WTC11 (cell line): ENCODE measurements at regions of chr18 and their contacts with region 1.

Region 1: GRCh38 chr18:12236934-12237832 is 17.0 kb upstream of the CIDEA start:
- DNase-seq: peak; percentile 89
- ATAC-seq: peak; percentile 98
- H3K4me3 Mint-ChIP-seq: no peak overlapping the region
- H3K27ac Mint-ChIP-seq: no peak overlapping the region
- H3K4me1 Mint-ChIP-seq: no peaks in the 10 kb centered on the region
- H3K27me3 Mint-ChIP-seq: peaks cover 6% of the 10 kb centered on the region
- CTCF ChIP-seq: peak; percentile 93

Region 2: GRCh38 chr18:11963991-11964484 is 273.1 kb before region 1 on chr18:
- CTCF ChIA-PET with region 1: no interaction called
- POLR2A ChIA-PET with region 1: no interaction called
- DNase-seq: no peak
- ATAC-seq: peak; percentile 46
- H3K4me3 Mint-ChIP-seq: no peak overlapping the region
- H3K27ac Mint-ChIP-seq: no peak overlapping the region
- H3K4me1 Mint-ChIP-seq: peaks cover 8% of the 10 kb centered on the region; the same call in 1 of the 2 replicates
- H3K27me3 Mint-ChIP-seq: no peaks in the 10 kb centered on the region
- CTCF ChIP-seq: no peak

Region 3: DNA sequence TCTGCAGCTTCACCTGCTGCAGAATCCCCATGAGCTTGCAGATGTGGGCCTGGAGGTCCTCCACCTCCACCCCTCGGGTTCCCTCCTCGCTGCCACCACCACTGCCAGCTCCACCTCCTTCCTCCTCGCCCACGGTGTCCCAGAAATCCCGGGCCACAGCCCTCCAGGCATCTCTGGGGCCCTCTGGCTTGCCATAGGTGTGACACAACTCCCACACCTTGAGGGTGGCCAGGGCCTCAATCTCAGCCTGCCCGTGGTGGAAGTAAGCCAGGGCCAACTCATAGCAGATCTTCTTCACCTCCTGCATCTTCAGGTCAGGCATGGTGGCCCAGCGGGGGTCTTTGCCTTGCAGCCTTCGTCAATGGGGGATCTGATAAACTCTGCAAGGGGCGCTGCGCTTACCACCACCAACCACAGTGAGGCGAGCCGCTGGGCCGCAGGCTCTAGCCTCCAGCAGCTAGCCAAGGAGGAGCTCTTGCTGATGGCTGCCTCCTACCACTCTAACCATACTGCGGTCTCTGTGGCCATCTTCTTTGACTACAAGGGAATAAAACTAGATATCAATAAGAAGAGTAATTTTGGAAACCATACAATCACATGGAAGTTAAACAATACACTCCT is 179.7 kb before region 1 on chr18:
- CTCF ChIA-PET with region 1: interaction called, 16 read pairs
- POLR2A ChIA-PET with region 1: no interaction called
- DNase-seq: peak; percentile 57
- ATAC-seq: peak; percentile 90
- H3K4me3 Mint-ChIP-seq: no peak overlapping the region
- H3K27ac Mint-ChIP-seq: no peak overlapping the region
- H3K4me1 Mint-ChIP-seq: no peaks in the 10 kb centered on the region
- H3K27me3 Mint-ChIP-seq: no peaks in the 10 kb centered on the region; the same call in 1 of the 2 replicates
- CTCF ChIP-seq: peak; percentile 24

Region 4: DNA sequence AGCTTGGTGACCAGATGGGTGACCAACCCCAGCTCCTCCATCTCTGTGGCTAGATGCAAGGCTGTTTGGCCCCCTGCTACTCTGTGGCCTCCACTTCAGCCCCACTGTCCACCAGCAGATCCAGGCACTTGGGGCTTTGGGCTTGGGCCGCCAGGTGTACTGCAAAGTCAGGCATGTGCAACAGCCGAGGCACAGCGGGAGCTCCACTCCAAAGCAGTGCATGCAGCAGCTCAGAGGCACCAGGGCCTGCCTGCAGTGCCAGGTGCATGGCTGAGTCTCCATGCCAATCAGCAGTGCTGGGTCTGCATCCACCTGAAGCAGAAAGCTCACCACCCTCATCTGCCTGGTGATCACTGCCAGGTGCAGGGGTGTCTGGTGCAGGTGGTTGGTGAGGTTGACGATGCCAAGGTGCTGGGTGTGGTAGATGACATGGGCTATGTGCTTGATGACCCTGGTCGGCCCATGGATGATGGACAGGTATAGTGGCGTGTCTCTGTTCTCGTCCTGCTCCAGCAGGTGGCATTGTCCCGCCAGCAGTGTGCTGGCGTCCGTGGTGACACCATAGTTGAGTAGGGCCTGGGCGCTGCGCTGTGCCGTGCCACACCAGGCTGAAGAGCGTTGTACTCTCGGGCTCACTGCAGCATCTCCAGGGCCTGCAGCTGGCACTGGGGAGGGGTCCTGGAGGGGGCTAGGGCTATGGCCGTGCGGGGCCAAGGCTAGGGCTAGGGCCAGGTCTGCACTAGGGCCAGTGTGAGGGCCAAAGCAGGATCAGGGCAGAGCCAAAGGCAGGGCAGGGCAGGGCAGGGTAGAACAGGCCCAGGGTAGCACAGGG is 144.6 kb before region 1 on chr18:
- CTCF ChIA-PET with region 1: interaction called, 23 read pairs
- POLR2A ChIA-PET with region 1: no interaction called
- DNase-seq: peak; percentile 63
- ATAC-seq: peak; percentile 92
- H3K4me3 Mint-ChIP-seq: no peak overlapping the region
- H3K27ac Mint-ChIP-seq: no peak overlapping the region
- H3K4me1 Mint-ChIP-seq: no peaks in the 10 kb centered on the region
- H3K27me3 Mint-ChIP-seq: peaks cover 4% of the 10 kb centered on the region
- CTCF ChIP-seq: no peak

Region 5: GRCh38 chr18:12159447-12159846 is 77.7 kb before region 1 on chr18:
- CTCF ChIA-PET with region 1: no interaction called
- POLR2A ChIA-PET with region 1: no interaction called
- DNase-seq: no peak
- ATAC-seq: no peak
- H3K4me3 Mint-ChIP-seq: no peak overlapping the region
- H3K27ac Mint-ChIP-seq: no peak overlapping the region
- H3K4me1 Mint-ChIP-seq: peaks cover 7% of the 10 kb centered on the region; the same call in 1 of the 2 replicates
- H3K27me3 Mint-ChIP-seq: no peaks in the 10 kb centered on the region
- CTCF ChIP-seq: no peak

Region 6: GRCh38 chr18:12254136-12254829 is 17.1 kb after region 1 on chr18 and contains the start of gene CIDEA:
- CTCF ChIA-PET with region 1: interaction called, 13 read pairs
- POLR2A ChIA-PET with region 1: no interaction called
- DNase-seq: peak; percentile 66
- ATAC-seq: peak; percentile 75
- H3K4me3 Mint-ChIP-seq: peak within 1 kb of the TSS; percentile 73
- H3K27ac Mint-ChIP-seq: no peak within 1 kb of the TSS
- H3K4me1 Mint-ChIP-seq: peaks cover 24% of the 10 kb centered on the region
- H3K27me3 Mint-ChIP-seq: peaks cover 70% of the 10 kb centered on the region
- CTCF ChIP-seq: no peak
- total RNA-seq, gene CIDEA: 0.23 to 0.50 TPM (median 0.23 TPM) in 3 replicates

Region 7: DNA sequence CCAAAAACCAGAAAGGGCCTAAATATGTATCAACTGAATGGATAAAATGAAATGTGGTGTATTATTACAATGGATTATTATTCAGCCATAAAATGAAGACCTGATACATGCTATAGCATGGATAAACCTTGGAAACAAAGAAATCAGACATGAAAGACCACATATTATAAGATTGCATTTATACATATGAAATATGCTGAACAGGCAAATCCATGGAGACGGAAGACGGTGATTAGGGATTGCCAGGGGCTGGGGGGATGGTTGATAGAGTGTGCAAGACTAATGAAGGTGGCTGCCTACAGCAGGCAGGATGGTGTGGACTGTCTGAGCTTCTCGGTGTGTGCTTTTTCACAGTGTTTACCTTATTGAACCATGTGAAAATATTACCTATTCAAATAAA is 151.3 kb after region 1 on chr18:
- CTCF ChIA-PET with region 1: no interaction called
- POLR2A ChIA-PET with region 1: no interaction called
- DNase-seq: no peak
- ATAC-seq: no peak
- H3K4me3 Mint-ChIP-seq: no peak overlapping the region
- H3K27ac Mint-ChIP-seq: no peak overlapping the region
- H3K4me1 Mint-ChIP-seq: no peaks in the 10 kb centered on the region
- H3K27me3 Mint-ChIP-seq: no peaks in the 10 kb centered on the region
- CTCF ChIP-seq: no peak

Region 8: GRCh38 chr18:12777500-12777944 is 540.3 kb after region 1 on chr18:
- CTCF ChIA-PET with region 1: no interaction called
- POLR2A ChIA-PET with region 1: no interaction called
- DNase-seq: peak; percentile 53
- ATAC-seq: peak; percentile 74
- H3K4me3 Mint-ChIP-seq: peak overlapping the region; percentile 65
- H3K27ac Mint-ChIP-seq: no peak overlapping the region
- H3K4me1 Mint-ChIP-seq: no peaks in the 10 kb centered on the region
- H3K27me3 Mint-ChIP-seq: peaks cover 48% of the 10 kb centered on the region
- CTCF ChIP-seq: no peak